Caco-2 (cell line): ENCODE measurements at regions of chr14 and their contacts with region 1.

Region 1: GRCh38 chr14:22589096-22589839 is at the start of gene DAD1:
- DNase-seq: peak; percentile 98
- H3K4me3 ChIP-seq: peak within 1 kb of the TSS; percentile 71
- H3K4me3 Mint-ChIP-seq: peak within 1 kb of the TSS; percentile 93
- H3K27ac Mint-ChIP-seq: peak within 1 kb of the TSS; percentile 97
- H3K4me1 ChIP-seq: peaks cover 35% of the 10 kb centered on the region
- H3K4me1 Mint-ChIP-seq: peaks cover 21% of the 10 kb centered on the region
- H3K27me3 ChIP-seq: no peaks in the 10 kb centered on the region
- H3K27me3 Mint-ChIP-seq: no peaks in the 10 kb centered on the region
- CTCF ChIP-seq: no peak
- total RNA-seq, gene DAD1: 151 and 160 TPM in 2 replicates

Region 2: GRCh38 chr14:22519877-22520685 is 69.2 kb before region 1 on chr14:
- CTCF ChIA-PET with region 1: no interaction called
- POLR2A ChIA-PET with region 1: no interaction called
- intact Hi-C with region 1: no loop called
- DNase-seq: no peak
- H3K4me3 ChIP-seq: no peak overlapping the region
- H3K4me3 Mint-ChIP-seq: no peak overlapping the region
- H3K27ac Mint-ChIP-seq: no peak overlapping the region
- H3K4me1 ChIP-seq: peaks cover 11% of the 10 kb centered on the region
- H3K4me1 Mint-ChIP-seq: peaks cover 25% of the 10 kb centered on the region
- H3K27me3 ChIP-seq: no peaks in the 10 kb centered on the region
- H3K27me3 Mint-ChIP-seq: no peaks in the 10 kb centered on the region
- CTCF ChIP-seq: no peak

Region 3: GRCh38 chr14:22606380-22606779 is 17.1 kb after region 1 on chr14:
- CTCF ChIA-PET with region 1: interaction called, 10 read pairs
- POLR2A ChIA-PET with region 1: interaction called, 10 read pairs
- intact Hi-C with region 1: no loop called
- DNase-seq: peak; percentile 71 to 82
- H3K4me3 ChIP-seq: no peak overlapping the region
- H3K4me3 Mint-ChIP-seq: peak overlapping the region; percentile 45
- H3K27ac Mint-ChIP-seq: peak overlapping the region; percentile 92
- H3K4me1 ChIP-seq: peaks cover 69% of the 10 kb centered on the region
- H3K4me1 Mint-ChIP-seq: peaks cover 43% of the 10 kb centered on the region
- H3K27me3 ChIP-seq: no peaks in the 10 kb centered on the region
- H3K27me3 Mint-ChIP-seq: no peaks in the 10 kb centered on the region
- CTCF ChIP-seq: no peak

Region 4: GRCh38 chr14:22614224-22614799 is 25.0 kb after region 1 on chr14:
- CTCF ChIA-PET with region 1: no interaction called
- POLR2A ChIA-PET with region 1: no interaction called
- intact Hi-C with region 1: loop called (anchors 1 kb)
- DNase-seq: peak; percentile 88 to 94
- H3K4me3 ChIP-seq: no peak overlapping the region
- H3K4me3 Mint-ChIP-seq: peak overlapping the region; percentile 46
- H3K27ac Mint-ChIP-seq: peak overlapping the region; percentile 99
- H3K4me1 ChIP-seq: peaks cover 28% of the 10 kb centered on the region
- H3K4me1 Mint-ChIP-seq: peaks cover 26% of the 10 kb centered on the region
- H3K27me3 ChIP-seq: no peaks in the 10 kb centered on the region
- H3K27me3 Mint-ChIP-seq: no peaks in the 10 kb centered on the region
- CTCF ChIP-seq: no peak

Region 5: DNA sequence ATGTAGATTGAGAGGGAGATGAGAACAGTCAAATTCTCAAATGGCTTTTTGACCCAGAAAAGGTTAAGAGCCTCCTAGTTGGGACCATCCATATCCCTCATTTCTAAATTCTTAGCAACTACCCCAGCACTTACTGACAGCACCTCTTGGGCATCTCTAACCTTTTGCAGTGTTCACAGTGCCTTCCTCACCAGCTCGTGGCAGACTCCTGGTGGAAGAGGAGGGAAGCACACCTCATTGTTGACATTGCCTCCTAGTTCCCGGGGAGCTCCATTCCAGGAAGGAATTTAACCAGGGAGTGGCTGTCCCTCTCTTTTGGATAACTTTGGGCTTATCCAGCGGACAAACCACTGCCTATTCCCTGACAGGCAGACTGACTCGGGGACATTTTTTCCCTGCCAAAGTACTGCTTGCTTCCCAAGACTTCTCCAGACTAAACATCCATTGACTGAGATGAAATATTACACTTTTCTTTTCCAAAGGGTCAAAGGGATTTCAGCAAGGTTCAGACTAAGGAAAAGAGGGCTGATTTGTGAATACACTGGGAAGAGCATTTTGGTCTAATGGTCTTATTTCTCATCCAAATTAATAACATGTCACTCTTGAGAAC is 63.8 kb after region 1 on chr14:
- CTCF ChIA-PET with region 1: interaction called, 14 read pairs
- POLR2A ChIA-PET with region 1: interaction called, 5 read pairs
- intact Hi-C with region 1: no loop called
- DNase-seq: peak; percentile 85 to 86
- H3K4me3 ChIP-seq: no peak overlapping the region
- H3K4me3 Mint-ChIP-seq: no peak overlapping the region
- H3K27ac Mint-ChIP-seq: peak overlapping the region; percentile 68
- H3K4me1 ChIP-seq: peaks cover 31% of the 10 kb centered on the region
- H3K4me1 Mint-ChIP-seq: peaks cover 12% of the 10 kb centered on the region
- H3K27me3 ChIP-seq: no peaks in the 10 kb centered on the region
- H3K27me3 Mint-ChIP-seq: no peaks in the 10 kb centered on the region
- CTCF ChIP-seq: peak; percentile 80 to 91

Region 6: GRCh38 chr14:22766456-22767322 is 177.4 kb after region 1 on chr14 and contains the start of gene OXA1L:
- CTCF ChIA-PET with region 1: no interaction called
- POLR2A ChIA-PET with region 1: interaction called, 11 read pairs
- intact Hi-C with region 1: no loop called
- DNase-seq: peak; percentile 94 to 97
- H3K4me3 ChIP-seq: peak within 1 kb of the TSS; percentile 77
- H3K4me3 Mint-ChIP-seq: peak within 1 kb of the TSS; percentile 93
- H3K27ac Mint-ChIP-seq: peak within 1 kb of the TSS; percentile 98
- H3K4me1 ChIP-seq: no peaks in the 10 kb centered on the region
- H3K4me1 Mint-ChIP-seq: peaks cover 29% of the 10 kb centered on the region
- H3K27me3 ChIP-seq: no peaks in the 10 kb centered on the region
- H3K27me3 Mint-ChIP-seq: no peaks in the 10 kb centered on the region
- CTCF ChIP-seq: no peak
- total RNA-seq, gene OXA1L: 110 and 116 TPM in 2 replicates